GM23248 (cell line): ENCODE measurements at regions of chr12 and their contacts with region 1.

Region 1: DNA sequence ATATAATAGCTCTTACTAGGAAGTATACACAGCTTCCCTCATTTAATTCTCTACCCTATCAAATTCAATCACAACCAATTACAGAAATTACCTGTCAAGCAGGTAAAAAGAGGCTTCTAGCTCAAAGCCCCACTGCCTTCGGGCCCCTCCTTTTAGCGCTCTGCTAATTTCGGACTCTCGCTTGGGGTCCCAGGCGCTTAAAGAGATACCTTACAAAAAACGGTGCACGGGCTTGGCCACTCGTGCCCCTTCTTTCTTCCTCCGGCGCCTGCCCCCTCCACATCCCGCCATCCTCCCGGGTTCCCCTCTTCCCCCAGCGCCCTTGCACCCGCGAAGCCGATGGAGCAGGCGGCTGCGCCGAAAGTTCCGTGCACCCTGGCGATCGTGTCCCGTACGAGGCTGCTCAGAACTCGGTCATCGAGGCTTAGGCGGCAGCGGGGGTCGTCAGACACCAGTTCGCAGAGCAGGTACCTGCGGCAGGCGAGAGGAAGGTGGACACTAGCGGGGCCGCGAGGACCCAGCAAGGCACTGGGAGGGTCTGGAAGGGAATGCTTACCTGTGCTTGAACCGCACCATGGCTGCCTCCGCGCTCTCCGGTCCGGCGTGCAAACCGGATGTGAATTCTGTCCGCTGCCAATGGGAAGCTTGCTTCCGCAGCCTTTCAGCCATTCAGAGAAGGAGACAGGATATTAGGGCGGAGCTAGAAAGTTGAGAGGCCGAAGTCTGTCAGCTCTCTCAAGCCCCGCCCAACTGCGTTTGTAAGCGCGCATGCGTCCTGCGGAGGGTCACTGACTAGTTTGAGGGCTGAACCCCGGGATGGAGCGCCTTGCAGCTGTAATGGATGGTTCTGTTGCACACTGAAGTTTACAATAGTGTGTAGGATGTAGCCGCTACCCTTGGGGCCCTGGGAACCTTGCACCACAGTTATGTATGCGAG is at the start of gene POP5:
- DNase-seq: peak; percentile 100
- H3K4me3 ChIP-seq: peak within 1 kb of the TSS; percentile 84
- H3K27ac ChIP-seq: peak within 1 kb of the TSS; percentile 41
- H3K4me1 ChIP-seq: peaks cover 7% of the 10 kb centered on the region; the same call in 1 of the 2 replicates
- H3K27me3 ChIP-seq: no peaks in the 10 kb centered on the region
- total RNA-seq, gene POP5: 20.1 and 38.9 TPM in 2 replicates

Region 2: DNA sequence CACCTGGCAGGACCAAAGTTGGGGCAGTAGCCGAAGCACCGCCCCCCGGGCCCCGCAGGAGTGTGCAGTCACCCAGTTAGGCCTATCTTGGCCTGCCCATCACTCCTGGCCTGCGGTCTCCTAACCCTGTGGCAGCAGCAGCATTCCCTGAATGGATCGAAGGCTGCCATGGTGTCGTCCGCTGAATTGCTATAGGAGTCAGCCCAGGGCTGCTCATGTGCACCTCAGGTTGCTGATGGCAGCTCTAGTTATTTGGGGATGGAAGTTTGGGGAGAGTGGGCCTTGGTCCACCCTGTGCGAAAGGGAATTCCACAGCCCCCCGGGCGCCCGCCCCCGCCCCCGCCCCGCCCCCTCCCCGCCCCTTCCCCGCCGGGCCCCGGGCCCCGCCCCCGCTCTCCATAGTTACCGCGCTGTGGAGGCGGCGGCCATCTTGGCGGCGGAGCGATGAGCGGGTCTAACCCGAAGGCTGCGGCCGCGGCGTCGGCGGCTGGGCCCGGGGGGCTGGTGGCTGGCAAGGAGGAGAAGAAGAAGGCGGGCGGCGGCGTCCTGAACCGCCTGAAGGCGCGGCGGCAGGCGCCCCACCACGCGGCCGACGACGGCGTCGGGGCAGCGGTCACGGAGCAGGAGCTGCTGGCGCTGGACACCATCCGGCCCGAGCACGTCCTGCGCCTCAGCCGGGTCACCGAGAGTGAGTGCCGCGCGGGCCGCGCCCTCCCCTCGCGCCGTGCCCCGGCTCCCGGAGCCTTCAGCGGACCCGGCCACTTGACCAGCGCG is 129.2 kb after region 1 on chr12 and contains the start of gene UNC119B:
- in situ Hi-C with region 1: loop called (anchors 10 kb)
- DNase-seq: peak; percentile 83
- H3K4me3 ChIP-seq: peak within 1 kb of the TSS; percentile 95
- H3K27ac ChIP-seq: peak within 1 kb of the TSS; percentile 60
- H3K4me1 ChIP-seq: peaks cover 12% of the 10 kb centered on the region
- H3K27me3 ChIP-seq: no peaks in the 10 kb centered on the region
- total RNA-seq, gene UNC119B: 17.8 and 22.4 TPM in 2 replicates

Region 3: DNA sequence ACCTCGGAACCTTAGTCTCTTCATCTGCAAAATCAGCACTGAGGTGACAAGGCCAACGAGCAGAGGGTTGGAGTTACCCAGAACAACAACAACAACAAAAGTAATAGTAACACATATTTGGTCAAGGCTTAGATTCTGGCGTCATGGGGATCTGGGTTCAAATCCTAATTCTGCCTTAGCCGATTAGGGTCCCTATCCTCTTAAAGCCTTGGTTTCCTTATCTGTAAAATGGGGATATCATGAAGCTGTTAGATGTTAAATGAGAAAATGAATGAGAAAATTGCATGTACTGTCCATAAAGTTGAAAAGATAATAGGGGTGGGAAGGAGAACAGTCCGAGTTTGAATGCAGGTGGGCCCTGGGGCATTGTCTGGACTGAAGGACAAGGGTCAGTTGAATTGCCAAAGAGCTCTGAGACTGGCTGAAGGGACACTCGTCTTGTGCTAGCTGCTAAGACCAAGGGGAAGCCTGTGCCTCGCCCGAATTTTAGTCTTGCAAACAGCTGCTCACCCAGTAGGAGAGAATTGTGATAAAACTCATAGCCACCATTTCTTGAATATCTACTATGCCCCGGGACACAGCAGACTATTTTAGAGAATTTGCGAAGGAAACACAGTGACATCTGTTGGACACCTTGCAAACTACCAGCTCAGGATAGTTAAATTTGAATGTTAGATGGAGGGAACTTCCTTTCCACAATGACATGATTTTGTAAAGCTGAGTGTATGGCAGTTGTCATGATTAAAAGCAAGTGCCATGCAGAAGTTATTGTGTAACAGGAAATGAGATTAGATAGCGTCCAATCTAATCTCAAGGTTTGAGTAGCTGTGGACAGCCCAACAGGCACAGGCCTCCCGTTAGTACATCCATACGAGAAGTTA is 390.5 kb after region 1 on chr12:
- in situ Hi-C with region 1: loop called (anchors 10 kb)
- DNase-seq: peak; percentile 78
- H3K4me3 ChIP-seq: no peak overlapping the region
- H3K27ac ChIP-seq: no peak overlapping the region
- H3K4me1 ChIP-seq: no peaks in the 10 kb centered on the region
- H3K27me3 ChIP-seq: peaks cover 3% of the 10 kb centered on the region; the same call in 1 of the 2 replicates